Ascending aorta (tissue), 2 donors: ENCODE measurements at regions of chr2 and their contacts with region 1.

Region 1: DNA sequence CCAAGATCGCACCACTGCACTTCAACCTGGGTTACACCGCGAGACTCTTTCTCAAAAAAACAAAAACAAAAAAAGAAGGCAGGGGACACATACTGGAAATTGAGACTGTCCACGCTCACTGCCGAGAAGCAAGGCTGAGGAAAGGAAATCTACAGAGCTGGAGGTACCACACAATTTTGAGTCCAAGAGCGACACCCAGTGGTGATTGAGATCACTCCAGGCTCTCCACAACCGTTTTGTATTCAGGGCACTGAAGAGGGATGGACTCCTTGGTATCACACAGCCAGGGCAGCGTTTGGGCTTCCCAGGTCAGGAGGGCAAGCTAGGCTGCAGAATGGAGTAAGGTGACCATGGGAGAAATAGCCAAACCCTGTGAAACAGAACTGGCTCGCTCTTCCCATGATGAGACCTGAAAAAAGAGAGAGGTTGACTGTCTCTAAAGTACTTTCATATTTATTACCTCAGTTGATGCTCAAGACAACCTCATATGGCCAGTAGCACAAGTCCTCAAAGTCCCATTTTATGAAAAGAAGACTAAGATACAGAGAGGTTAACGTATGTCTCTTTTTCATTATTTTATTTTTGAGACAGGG is 74.5 kb upstream of the YPEL5 start:
- DNase-seq: peak in 1 of 2 donors; percentile 66
- H3K4me3 ChIP-seq: no peak overlapping the region
- H3K27ac ChIP-seq: no peak overlapping the region
- H3K4me1 ChIP-seq: no peaks in the 10 kb centered on the region
- H3K27me3 ChIP-seq: no peaks in the 10 kb centered on the region
- CTCF ChIP-seq: peak in 2 of 3 experiments; percentile 26 to 54

Region 2: DNA sequence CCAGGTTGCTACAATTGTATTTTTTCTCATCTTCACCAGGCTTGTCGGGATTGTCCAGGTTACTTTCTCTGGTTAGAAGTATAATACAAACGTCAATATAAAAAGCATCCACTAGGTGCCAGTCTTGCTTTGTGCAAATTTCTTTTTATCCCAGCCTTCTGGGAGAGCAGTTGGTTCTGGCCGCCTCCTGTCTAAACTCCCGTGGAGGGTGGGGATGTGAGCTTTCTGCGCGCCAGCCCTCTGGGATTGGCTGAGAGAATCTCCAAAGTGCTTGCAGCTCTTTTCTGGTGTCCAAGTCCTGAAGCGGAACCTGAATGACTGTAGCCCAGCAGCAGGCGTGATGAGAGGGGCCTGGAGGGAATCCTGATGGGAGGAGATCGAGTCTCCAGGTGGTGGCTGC is 1113.7 kb before region 1 on chr2:
- intact Hi-C with region 1: loop called (anchors 10 kb)
- DNase-seq: peak in 1 of 2 donors; percentile 71
- H3K4me3 ChIP-seq: no peak overlapping the region
- H3K27ac ChIP-seq: no peak overlapping the region
- H3K4me1 ChIP-seq: no peaks in the 10 kb centered on the region
- H3K27me3 ChIP-seq: no peaks in the 10 kb centered on the region
- CTCF ChIP-seq: peak; percentile 54 to 74 (median 71)

Region 3: GRCh38 chr2:30139131-30139870 is 67.0 kb after region 1 on chr2:
- intact Hi-C with region 1: no loop called
- DNase-seq: no peak
- H3K4me3 ChIP-seq: no peak overlapping the region
- H3K27ac ChIP-seq: no peak overlapping the region
- H3K4me1 ChIP-seq: no peaks in the 10 kb centered on the region
- H3K27me3 ChIP-seq: no peaks in the 10 kb centered on the region
- CTCF ChIP-seq: no peak